ENCODE measurements at regions of chr16 and their contacts with region 1.

Region 1: GRCh38 chr16:31179747-31180459 is at the start of gene FUS:
- DNase-seq: peak; percentile 96
- CTCF ChIP-seq: no peak

Region 2: GRCh38 chr16:31117391-31118197 is 62.3 kb before region 1 on chr16 and contains the start of gene KAT8:
- CTCF ChIA-PET with region 1: no interaction called
- POLR2A ChIA-PET with region 1: interaction called, 23 read pairs
- DNase-seq: peak; percentile 99
- CTCF ChIP-seq: no peak

Region 3: DNA sequence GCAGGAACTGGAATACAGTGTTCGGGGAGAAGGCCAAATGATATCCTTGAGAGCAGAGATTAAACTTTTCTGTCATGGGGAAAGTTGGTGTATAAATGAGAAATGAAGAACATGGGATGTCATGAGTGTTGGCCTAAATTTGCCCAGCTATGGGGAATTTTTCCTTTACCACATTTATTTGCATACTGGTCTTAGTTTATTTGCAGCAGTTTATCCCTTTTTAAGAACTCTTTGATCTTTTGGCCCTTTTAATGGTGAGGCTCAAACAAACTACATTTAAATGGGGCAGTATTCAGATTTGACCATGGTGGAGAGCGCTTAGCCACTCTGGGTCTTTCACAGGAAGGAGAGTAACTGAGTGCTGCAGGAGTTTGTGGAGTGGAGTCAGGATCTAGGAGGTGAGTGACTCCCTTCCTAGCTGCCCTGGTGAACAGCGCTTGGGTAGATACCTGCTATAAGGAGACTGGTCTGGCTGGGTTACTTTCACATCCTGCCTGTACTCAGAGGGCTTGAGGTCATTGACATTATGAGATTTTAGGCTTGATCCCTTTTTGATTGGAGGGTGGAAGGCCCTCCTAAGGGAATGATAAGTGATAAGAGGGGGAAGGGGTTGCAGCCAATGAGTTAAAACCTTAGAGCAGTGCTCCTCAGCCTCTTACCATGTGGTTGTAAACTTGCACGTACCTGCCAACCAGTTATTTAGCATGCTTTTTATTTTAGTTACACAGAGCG is 12.0 kb after region 1 on chr16:
- CTCF ChIA-PET with region 1: no interaction called
- POLR2A ChIA-PET with region 1: interaction called, 27 read pairs
- DNase-seq: no peak
- CTCF ChIP-seq: no peak

Region 4: GRCh38 chr16:31221357-31222160 is 41.7 kb after region 1 on chr16:
- CTCF ChIA-PET with region 1: no interaction called
- POLR2A ChIA-PET with region 1: no interaction called
- DNase-seq: peak; percentile 8
- CTCF ChIP-seq: no peak

Region 5: DNA sequence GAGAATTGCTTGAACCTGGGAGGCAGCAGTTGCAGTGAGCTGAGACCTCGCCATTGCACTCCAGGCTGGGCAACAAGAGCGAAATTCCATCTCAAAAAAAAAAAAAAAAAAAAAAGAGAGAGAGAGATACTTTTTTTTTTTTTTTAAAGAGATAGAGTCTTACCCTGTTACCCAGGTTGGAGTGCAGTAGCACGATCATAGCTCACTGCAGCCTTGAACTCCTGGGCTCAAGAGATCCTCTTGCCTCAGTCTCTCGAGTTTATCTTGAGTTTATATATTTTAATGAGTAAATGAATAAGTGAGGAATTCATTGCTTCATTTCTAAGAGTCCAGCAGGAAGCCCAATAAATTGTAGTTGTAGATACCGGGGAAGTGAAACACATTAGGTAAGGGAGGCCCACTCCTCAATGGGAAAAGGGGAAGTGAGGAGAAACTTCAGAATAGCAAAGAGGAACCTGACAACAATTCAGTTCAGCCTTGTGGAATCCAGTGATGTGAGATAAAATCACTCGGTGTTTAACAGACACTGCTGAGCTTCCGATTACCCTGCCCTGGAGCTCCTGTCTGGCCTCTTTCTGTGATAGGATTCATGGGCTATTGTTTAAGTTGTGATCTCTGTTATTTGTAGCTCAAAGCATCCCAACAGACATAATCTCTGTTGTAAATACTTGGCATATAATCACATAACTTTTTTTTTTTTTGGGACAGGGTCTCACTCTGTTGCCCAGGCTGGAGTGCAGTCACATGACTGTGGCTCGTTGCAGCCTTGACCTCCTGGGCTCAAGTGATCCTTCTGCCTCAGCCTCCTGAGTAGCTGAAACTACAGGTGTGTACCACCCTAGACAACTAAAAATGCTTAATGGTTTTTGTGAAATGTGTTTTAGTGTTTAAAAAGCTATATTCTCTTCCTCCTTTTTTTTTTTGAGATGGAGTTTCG is 64.1 kb after region 1 on chr16:
- CTCF ChIA-PET with region 1: no interaction called
- POLR2A ChIA-PET with region 1: no interaction called
- DNase-seq: peak; percentile 59
- CTCF ChIP-seq: no peak

Region 6: GRCh38 chr16:31427441-31428278 is 247.8 kb after region 1 on chr16:
- CTCF ChIA-PET with region 1: no interaction called
- POLR2A ChIA-PET with region 1: interaction called, 16 read pairs
- DNase-seq: peak; percentile 61
- CTCF ChIP-seq: no peak

Measured in GM10248 (cell line).